Left cardiac atrium (tissue), 4 donors: ENCODE measurements at regions of chr10 and their contacts with region 1.

Region 1: GRCh38 chr10:89426230-89426868 is 12.0 kb downstream of the IFIT5 start:
- DNase-seq: no peak
- ATAC-seq: peak; percentile 71 to 75

Region 2: GRCh38 chr10:89171263-89171872 is 255.0 kb before region 1 on chr10:
- intact Hi-C with region 1: no loop called
- DNase-seq: no peak
- ATAC-seq: no peak

Region 3: DNA sequence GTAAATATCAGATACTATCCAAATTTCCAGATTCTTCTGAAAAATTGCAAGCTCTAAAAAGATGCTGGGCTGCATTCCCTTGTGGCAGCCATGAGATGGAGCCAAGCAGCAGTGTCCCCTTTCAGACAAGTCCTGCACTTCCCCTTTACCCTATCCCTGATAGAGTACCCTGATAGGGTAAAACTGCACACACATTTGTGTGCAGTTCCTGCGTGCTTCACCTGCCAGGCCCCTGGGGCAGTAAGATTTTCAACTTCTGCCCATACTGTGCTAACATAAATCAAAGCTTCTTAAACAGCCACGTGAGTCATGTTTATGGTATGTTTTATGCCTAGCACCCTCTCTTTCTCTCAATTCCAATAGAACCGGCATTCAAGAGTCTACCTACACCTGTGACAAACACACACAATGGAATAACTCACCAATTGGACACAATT is 40.3 kb after region 1 on chr10:
- intact Hi-C with region 1: loop called in 1 of 2 experiments (anchors 5 kb)
- DNase-seq: no peak
- ATAC-seq: peak in 1 of 2 donors; percentile 65

Region 4: DNA sequence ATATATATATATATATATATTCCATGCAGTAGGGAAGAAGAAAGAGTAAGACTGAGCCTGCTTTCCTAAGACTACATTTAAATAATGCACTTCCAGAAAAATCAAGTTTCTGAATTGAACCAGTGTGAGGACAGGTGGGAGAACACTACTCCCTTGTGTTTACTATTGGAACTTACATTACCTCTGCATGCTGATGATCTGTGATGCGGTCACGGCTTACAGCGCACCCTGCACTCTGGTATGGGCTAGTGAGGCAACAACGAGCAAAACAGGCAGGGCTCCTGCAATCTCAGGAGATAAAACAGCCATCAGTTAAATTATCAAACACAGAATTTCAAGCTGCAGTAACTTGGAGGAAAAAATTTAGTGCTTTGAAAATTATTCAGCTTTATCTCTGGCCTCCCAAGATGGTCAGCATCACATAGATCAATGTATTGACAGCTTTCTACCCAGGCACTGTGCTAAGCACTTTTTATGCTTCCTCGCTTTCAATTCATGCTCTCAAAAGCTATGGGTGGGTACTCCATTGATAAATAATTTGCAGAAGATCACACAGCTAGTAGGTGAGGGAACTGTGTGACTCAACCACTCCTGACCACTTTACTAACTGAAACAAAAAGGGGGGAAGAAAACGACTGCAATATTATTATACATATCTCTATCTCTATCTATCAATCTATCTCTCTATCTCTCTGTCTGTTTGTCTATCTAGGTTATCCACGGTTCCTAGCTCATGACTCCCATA is 129.5 kb after region 1 on chr10:
- intact Hi-C with region 1: loop called (anchors 2 to 5 kb)
- DNase-seq: no peak
- ATAC-seq: peak; percentile 43 to 76

Region 5: GRCh38 chr10:89563861-89564478 is 137.6 kb after region 1 on chr10:
- intact Hi-C with region 1: loop called (anchors 2 to 5 kb)
- DNase-seq: no peak
- ATAC-seq: peak; percentile 63 to 66

Region 6: GRCh38 chr10:89701238-89702120 is 275.1 kb after region 1 on chr10 and contains the start of gene KIF20B:
- intact Hi-C with region 1: loop called in 1 of 2 experiments (anchors 10 kb)
- DNase-seq: peak; percentile 96
- ATAC-seq: peak; percentile 100
- total RNA-seq, gene KIF20B: 1.6 to 4.0 TPM